ENCODE measurements at regions of chrX and their contacts with region 1.

Region 1: GRCh38 chrX:2595258-2595657 is 94.5 kb upstream of the DHRSX start:
- DNase-seq: no peak
- H3K4me3 ChIP-seq: no peak overlapping the region
- H3K27ac ChIP-seq: no peak overlapping the region
- H3K4me1 ChIP-seq: no peaks in the 10 kb centered on the region
- H3K27me3 ChIP-seq: no peaks in the 10 kb centered on the region
- CTCF ChIP-seq: no peak
- POLR2A ChIP-seq: no peak

Region 2: DNA sequence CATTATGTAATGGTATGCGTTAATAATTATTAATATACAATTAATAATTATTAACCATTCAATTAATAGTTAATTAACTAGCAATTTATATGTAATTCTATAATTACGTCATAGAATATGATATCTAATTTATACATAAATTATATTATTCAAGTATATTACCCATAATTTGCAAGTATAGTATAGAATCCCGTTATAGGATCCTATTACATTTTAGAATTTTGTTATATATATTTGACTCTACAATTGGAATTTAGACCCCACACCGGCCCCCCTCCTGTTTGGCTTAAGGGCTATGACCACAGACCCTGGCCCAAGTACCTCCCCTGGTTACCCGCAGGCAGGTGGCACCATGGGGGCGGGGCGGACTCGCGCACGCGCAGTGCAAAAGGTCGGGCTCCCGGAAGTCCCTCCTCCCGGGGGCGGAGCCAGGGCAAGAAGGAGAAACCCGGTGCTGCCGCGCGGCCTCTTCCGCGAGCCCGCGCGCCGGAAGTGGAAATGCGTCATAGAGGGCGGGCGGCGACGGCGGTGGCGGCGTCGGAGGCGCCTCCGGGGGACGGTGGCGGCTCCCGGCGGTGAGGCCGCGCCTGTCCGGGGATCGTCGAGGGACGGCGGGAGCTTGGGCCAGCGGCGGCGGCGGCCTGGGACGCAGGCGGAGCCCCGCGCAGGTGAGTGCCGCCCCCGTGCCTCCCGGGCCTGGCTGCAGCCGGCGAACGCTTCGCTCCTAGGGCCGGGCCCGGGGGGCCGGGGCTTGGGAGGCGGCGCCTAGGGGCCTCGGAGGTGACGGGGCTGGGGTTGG is 1004.0 kb before region 1 on chrX and contains the start of gene AKAP17A:
- CTCF ChIA-PET with region 1: no interaction called
- POLR2A ChIA-PET with region 1: no interaction called
- dilution Hi-C with region 1: no loop called
- intact Hi-C with region 1: loop called (anchors 1 kb)
- DNase-seq: peak; percentile 95
- H3K4me3 ChIP-seq: peak within 1 kb of the TSS; percentile 76 to 96 (median 90)
- H3K27ac ChIP-seq: peak within 1 kb of the TSS; percentile 89
- H3K4me1 ChIP-seq: peaks cover 2% of the 10 kb centered on the region
- H3K27me3 ChIP-seq: no peaks in the 10 kb centered on the region
- CTCF ChIP-seq: no peak
- POLR2A ChIP-seq: peak; percentile 88
- total RNA-seq, gene AKAP17A: 39.7 and 45.5 TPM in 2 replicates

Region 3: GRCh38 chrX:1649621-1650020 is 945.6 kb before region 1 on chrX:
- CTCF ChIA-PET with region 1: no interaction called
- POLR2A ChIA-PET with region 1: no interaction called
- dilution Hi-C with region 1: loop called (anchors 25 kb)
- intact Hi-C with region 1: loop called (anchors 1 kb)
- DNase-seq: no peak
- H3K4me3 ChIP-seq: no peak overlapping the region
- H3K27ac ChIP-seq: no peak overlapping the region
- H3K4me1 ChIP-seq: no peaks in the 10 kb centered on the region
- H3K27me3 ChIP-seq: no peaks in the 10 kb centered on the region
- CTCF ChIP-seq: no peak
- POLR2A ChIP-seq: no peak

Region 4: DNA sequence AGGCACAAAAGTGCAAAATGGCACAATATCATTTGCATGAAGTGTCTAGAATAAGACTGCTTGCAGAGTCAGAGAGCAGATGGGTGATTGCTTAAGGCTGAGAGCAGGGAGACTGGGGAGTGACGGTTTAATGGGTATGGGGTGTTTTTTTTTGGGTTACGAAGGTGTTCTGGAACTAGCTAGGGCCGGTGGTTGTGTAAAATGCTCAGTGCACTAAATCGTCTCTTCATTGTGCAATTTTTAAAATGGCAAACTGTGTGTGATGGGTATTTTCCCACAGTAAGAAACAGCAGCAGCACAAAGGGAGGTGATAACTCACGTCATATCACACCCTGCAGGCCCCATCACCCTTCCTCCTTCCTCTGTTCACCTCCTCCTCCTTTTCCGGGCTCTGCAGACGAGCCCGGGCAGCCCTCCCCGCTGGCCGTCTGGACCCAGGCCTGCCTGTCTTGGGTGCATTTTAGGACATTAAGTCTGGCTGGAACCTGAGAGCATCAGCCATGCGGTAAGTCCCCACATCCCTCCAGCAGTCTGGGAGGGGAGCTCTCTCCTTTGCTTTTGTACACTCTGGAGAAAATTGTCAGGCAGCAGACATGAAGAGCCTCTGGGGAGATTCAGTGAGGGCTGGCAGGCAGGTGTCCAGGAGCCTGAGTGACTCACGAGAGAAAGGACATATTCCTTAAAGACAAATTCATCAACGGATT is 937.7 kb before region 1 on chrX:
- CTCF ChIA-PET with region 1: no interaction called
- POLR2A ChIA-PET with region 1: no interaction called
- dilution Hi-C with region 1: loop called (anchors 25 kb)
- intact Hi-C with region 1: loop called (anchors 1 kb)
- DNase-seq: peak; percentile 77
- H3K4me3 ChIP-seq: peak overlapping the region in 2 of 3 experiments; percentile 17 to 60
- H3K27ac ChIP-seq: peak overlapping the region; percentile 38
- H3K4me1 ChIP-seq: peaks cover 8% of the 10 kb centered on the region
- H3K27me3 ChIP-seq: no peaks in the 10 kb centered on the region
- CTCF ChIP-seq: no peak
- POLR2A ChIP-seq: peak; percentile 45

Region 5: GRCh38 chrX:1673337-1673736 is 921.9 kb before region 1 on chrX:
- CTCF ChIA-PET with region 1: no interaction called
- POLR2A ChIA-PET with region 1: no interaction called
- dilution Hi-C with region 1: loop called (anchors 25 kb)
- intact Hi-C with region 1: loop called (anchors 1 kb)
- DNase-seq: peak; percentile 30
- H3K4me3 ChIP-seq: no peak overlapping the region
- H3K27ac ChIP-seq: no peak overlapping the region
- H3K4me1 ChIP-seq: no peaks in the 10 kb centered on the region
- H3K27me3 ChIP-seq: no peaks in the 10 kb centered on the region
- CTCF ChIP-seq: peak; percentile 60
- POLR2A ChIP-seq: no peak

Region 6: DNA sequence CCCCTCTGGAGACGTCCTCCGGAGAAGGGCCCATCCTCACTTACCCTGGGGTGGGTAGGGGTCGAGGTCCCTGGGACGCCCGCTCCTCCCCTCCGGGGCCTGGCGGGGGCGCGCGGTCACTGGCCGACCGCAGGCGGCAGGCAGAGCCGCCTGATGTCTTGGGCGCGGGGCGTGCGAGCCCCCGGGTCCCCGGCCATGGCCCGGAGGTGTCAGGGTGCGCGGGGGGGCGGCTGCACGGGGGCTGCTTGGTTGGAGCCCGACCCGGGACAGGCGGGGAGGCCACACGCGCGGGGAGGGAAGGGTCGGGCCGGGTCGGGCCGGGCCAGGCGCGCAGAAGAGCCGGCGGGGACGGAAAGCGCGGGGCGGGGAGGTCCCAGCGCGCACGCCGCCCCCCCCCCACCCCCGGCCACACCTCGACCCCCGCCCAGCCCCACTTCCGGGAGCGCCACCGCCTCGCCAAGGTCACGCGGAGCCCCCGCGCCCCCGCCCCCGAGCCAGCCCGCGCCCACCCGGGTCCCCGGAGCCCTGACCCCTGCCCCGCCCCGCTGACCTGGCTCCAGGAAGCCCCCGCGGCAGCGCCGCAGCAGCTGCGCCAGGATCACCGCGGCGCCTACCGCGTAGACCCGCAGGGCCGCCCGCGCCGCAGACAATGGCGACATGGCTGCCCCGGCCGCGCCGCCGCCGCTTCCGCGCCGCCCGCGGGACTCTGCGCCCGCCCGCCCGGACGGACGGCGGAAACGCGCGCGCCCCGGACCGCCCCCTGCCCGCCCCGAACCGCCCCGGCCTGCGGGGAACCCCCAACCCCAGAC is 94.8 kb before region 1 on chrX and contains the starts of genes DHRSX and ZBED1:
- CTCF ChIA-PET with region 1: no interaction called
- POLR2A ChIA-PET with region 1: no interaction called
- dilution Hi-C with region 1: no loop called
- intact Hi-C with region 1: loop called (anchors 1 kb)
- DNase-seq: peak; percentile 49
- H3K4me3 ChIP-seq: peak within 1 kb of the TSS; percentile 83 to 93 (median 84)
- H3K27ac ChIP-seq: peak within 1 kb of the TSS; percentile 54
- H3K4me1 ChIP-seq: peaks cover 13% of the 10 kb centered on the region
- H3K27me3 ChIP-seq: no peaks in the 10 kb centered on the region
- CTCF ChIP-seq: peak in 1 of 2 donors; percentile 33
- POLR2A ChIP-seq: peak; percentile 77
- total RNA-seq, gene DHRSX: 27.1 and 29.3 TPM in 2 replicates
- total RNA-seq, gene ZBED1: 43.7 and 46.5 TPM in 2 replicates